Activated CD4-positive, alpha-beta T cell treated with anti-CD3 and anti-CD28 coated beads, Interleukin-2, amount 10 ng/mL, durations not matched to agents 24 days and 14 days (primary cell): ENCODE measurements at regions of chr7 and their contacts with region 1.

Region 1: GRCh38 chr7:129825496-129826267 is 127.1 kb downstream of the UBE2H start:
- DNase-seq: peak; percentile 97
- H3K4me3 Mint-ChIP-seq: peak overlapping the region; percentile 94
- H3K27ac Mint-ChIP-seq: peak overlapping the region; percentile 85
- H3K4me1 Mint-ChIP-seq: peaks cover 14% of the 10 kb centered on the region
- H3K27me3 Mint-ChIP-seq: no peaks in the 10 kb centered on the region

Region 2: DNA sequence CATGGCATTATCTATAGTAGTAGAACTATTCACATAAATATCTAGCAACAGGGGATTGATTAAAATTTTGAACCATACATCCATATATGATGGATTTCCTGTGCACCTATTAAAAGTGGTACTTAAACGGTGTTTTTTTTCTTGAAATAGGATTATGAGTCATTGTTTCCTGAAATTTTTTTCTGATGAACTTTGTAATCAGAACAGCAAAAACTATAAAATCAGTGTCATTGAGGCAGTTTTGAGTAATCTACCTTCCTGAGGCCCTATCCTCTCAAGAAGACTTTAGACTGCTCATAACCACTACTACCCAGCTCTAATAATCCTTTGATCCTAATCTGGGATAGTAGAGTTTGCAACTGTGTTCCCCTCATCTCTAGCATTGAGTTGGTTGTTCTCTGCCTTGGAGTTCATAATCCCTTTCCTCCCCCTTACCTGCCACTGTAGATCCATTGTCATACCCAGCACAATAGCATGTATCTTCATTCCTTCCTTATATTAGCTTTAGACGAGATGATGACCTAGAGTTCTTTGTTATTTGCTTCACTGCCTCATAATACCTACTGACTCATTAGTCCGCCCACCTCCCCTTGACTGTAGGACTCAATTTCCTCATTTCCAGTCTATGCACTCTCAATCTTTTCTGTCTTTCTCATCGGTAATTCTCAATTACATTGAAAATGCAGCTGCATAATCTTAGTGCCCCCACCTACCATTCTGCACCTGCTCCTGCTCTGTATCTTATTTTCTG is 1927.8 kb before region 1 on chr7:
- intact Hi-C with region 1: no loop called
- DNase-seq: no peak
- H3K4me3 Mint-ChIP-seq: no peak overlapping the region
- H3K27ac Mint-ChIP-seq: no peak overlapping the region
- H3K4me1 Mint-ChIP-seq: peaks cover 32% of the 10 kb centered on the region
- H3K27me3 Mint-ChIP-seq: no peaks in the 10 kb centered on the region

Region 3: GRCh38 chr7:129224251-129225205 is 601.2 kb before region 1 on chr7 and contains the start of gene AHCYL2:
- intact Hi-C with region 1: loop called (anchors 1 kb)
- DNase-seq: peak; percentile 98
- H3K4me3 Mint-ChIP-seq: peak within 1 kb of the TSS; percentile 87
- H3K27ac Mint-ChIP-seq: peak within 1 kb of the TSS; percentile 96
- H3K4me1 Mint-ChIP-seq: peaks cover 24% of the 10 kb centered on the region
- H3K27me3 Mint-ChIP-seq: no peaks in the 10 kb centered on the region
- total RNA-seq, gene AHCYL2: 10.7 and 11.1 TPM in 2 replicates

Region 4: DNA sequence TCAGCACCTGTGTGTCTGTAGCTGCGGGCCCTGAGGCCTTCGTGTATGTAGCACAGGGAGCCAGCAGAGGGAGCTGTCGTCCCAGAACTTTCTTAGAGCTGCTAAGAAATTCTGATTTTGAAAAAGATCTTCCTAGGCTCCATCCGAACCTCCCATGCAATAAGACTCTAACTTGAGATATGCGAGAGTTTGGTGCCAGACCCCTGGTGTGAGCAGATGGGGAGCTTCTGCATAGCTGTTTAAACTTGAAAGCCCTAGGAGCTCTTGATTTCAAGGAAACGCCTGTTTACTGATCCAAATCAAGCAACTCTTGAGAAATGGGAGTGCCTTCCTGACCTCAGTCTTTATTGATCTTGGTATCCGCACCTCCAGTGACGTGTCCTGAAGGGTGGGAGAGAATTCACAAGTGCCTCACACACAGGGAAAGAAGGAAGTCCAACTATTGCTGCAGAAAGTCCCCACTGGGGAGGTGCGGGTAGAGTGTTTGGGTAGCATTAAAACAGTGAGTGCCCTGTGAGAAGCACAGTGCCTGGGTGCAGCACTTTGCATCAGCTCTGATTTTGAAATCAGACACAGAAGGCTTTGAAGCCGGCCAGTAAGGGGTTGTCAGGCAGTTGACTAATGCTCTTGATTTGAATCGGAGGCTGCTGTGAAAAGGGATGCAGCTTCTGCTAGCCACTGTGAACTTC is 457.8 kb before region 1 on chr7:
- intact Hi-C with region 1: loop called (anchors 2 kb)
- DNase-seq: peak; percentile 93
- H3K4me3 Mint-ChIP-seq: peak overlapping the region; percentile 73
- H3K27ac Mint-ChIP-seq: peak overlapping the region; percentile 89
- H3K4me1 Mint-ChIP-seq: peaks cover 37% of the 10 kb centered on the region
- H3K27me3 Mint-ChIP-seq: no peaks in the 10 kb centered on the region

Region 5: GRCh38 chr7:129605960-129606614 is 219.6 kb before region 1 on chr7:
- intact Hi-C with region 1: loop called (anchors 2 kb)
- DNase-seq: no peak
- H3K4me3 Mint-ChIP-seq: no peak overlapping the region
- H3K27ac Mint-ChIP-seq: peak overlapping the region; percentile 67
- H3K4me1 Mint-ChIP-seq: peaks cover 33% of the 10 kb centered on the region
- H3K27me3 Mint-ChIP-seq: no peaks in the 10 kb centered on the region

Region 6: DNA sequence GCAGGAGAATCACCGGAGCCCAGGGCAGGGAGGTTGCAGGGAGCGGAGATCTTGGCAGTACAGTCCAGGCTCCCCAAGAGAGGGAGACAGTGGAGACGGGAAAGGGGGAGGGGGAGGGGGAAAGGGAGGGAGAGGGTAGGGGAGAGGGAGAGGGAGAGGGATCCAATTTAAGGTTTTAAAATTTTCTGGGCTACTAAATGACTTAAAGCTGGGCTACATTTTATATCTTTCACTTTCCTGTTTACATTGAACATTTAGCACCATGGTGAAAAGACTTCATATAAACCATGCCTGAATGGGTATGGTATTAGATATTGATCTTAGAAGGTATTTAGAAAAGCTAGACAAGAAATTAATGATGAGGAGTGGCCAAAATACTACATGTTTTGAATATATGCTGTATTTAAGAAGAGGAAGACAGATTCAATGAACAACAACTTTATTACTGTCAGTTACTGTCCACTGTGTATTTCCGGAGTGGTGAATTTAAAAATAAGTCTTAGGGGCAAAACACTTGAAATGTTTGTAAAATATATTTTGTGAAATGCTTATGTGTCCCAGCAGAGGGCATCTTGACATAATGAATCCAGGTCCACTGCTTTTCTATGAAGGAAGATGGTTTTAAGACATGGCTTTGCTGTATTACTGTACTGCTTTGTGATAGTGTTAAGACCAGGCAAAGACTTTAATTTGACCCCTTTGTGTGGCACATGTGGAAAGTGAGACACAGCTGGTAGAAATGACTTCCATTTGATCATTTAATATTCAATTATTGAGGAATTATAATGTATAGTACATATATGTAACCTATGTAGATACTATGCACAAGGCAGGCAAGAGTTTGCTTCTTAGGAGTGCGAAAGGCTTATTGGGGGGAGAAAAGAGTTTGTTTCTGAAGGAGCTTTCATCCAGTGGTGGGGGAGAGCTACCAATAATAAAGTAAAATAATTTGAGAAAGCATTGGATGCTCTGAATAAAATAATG is 161.4 kb before region 1 on chr7:
- intact Hi-C with region 1: loop called (anchors 1 kb)
- DNase-seq: no peak
- H3K4me3 Mint-ChIP-seq: no peak overlapping the region
- H3K27ac Mint-ChIP-seq: no peak overlapping the region
- H3K4me1 Mint-ChIP-seq: peaks cover 4% of the 10 kb centered on the region
- H3K27me3 Mint-ChIP-seq: no peaks in the 10 kb centered on the region

Region 7: DNA sequence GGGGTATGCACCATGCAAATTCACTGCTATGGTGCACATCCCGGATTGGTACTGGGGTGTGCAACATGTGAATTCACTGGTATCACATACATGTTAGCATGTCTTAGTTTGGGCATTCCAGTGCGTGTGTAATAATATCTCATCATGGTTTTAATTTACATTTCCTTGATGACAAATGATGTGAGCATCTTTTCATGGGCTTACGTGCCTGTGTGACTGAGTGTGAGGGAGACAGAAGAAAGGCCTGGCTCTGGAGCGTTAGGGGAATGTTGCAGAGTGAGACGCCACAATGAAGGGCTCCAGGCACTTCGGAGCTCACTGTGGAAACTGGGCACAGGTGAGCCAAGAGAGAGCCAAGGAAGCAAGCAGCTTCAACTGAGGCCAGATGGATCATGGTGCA is 35.5 kb before region 1 on chr7:
- intact Hi-C with region 1: no loop called
- DNase-seq: no peak
- H3K4me3 Mint-ChIP-seq: no peak overlapping the region
- H3K27ac Mint-ChIP-seq: no peak overlapping the region
- H3K4me1 Mint-ChIP-seq: peaks cover 10% of the 10 kb centered on the region
- H3K27me3 Mint-ChIP-seq: peaks cover 46% of the 10 kb centered on the region

Region 8: DNA sequence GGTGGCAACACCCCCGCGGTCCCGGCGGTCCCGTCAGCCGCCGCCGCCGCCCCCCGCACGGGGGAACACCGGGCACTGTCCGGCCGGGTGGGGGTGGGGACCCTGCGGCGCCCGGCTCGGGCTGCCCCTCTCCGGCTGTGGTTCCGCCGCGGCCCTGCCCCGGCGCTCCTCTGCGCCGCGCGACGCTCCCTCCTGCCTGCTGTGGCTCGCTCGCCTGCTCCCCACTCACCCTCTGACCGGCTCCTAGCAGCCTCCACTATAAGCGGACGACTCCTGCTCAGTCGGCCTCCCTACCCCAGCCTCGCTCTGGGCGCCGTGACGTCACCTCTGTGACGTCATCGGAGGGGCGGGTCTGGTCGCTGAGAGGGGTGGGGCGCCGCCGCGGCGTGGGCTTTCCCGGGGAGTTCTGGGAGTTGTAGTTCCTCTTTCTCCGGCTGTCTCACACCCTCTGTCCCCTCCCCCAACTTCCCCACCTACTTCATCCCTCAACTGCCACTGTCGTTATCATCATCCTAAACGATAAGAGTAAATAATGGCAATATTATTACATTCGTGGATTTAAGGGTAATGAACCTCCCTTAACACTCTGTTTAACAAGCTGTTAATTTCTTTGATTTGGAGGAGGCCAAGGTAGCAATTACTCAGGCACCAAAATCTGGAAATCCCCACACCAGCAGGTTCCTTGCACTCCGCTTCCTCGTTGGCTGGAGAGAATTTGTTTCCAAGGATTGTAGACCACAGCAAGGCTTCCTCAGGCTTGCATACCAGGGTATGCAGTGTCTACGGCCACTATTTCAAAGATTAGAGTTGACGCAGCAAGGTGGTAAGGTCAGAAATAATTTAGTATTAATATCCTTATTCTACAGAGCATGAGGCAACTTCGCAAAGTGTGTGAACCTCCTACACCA is 127.2 kb after region 1 on chr7 and contains the start of gene UBE2H:
- intact Hi-C with region 1: loop called (anchors 5 kb)
- DNase-seq: peak; percentile 95
- H3K4me3 Mint-ChIP-seq: no peak within 1 kb of the TSS
- H3K27ac Mint-ChIP-seq: peak within 1 kb of the TSS; percentile 100
- H3K4me1 Mint-ChIP-seq: peaks cover 17% of the 10 kb centered on the region
- H3K27me3 Mint-ChIP-seq: peaks cover 5% of the 10 kb centered on the region
- total RNA-seq, gene UBE2H: 21.7 and 24.2 TPM in 2 replicates

Region 9: GRCh38 chr7:130127821-130128317 is 302.2 kb after region 1 on chr7:
- intact Hi-C with region 1: no loop called
- DNase-seq: no peak
- H3K4me3 Mint-ChIP-seq: no peak overlapping the region
- H3K27ac Mint-ChIP-seq: no peak overlapping the region
- H3K4me1 Mint-ChIP-seq: no peaks in the 10 kb centered on the region
- H3K27me3 Mint-ChIP-seq: no peaks in the 10 kb centered on the region